Activated CD4-positive, alpha-beta T cell treated with anti-CD3 and anti-CD28 coated beads, Interleukin-2, amount 10 ng/mL, durations not matched to agents 24 days and 14 days (primary cell): ENCODE measurements at regions of chr3 and their contacts with region 1.

Region 1: DNA sequence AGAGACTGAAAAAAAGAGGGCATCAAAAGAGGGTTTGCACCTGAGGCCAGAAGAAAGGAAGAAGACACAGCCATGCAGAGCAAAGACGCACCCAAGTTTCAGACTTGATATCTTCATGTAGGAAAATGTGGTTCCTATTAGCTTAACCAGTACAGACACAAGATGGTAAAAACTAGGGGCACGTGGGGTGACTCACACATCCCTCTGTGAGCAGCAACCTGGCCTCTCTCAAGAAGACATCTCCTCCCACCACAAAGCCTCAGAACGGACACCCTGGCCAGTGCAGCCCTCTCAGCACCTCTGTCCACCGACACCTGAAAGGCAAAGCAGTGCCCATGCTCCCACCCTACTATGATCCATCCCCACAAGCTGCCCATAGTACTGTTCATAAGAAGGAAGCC is 33.3 kb downstream of the GLB1 start:
- DNase-seq: peak; percentile 85
- H3K4me3 Mint-ChIP-seq: peak overlapping the region; percentile 59
- H3K27ac Mint-ChIP-seq: peak overlapping the region; percentile 93
- H3K4me1 Mint-ChIP-seq: peaks cover 59% of the 10 kb centered on the region
- H3K27me3 Mint-ChIP-seq: no peaks in the 10 kb centered on the region

Region 2: DNA sequence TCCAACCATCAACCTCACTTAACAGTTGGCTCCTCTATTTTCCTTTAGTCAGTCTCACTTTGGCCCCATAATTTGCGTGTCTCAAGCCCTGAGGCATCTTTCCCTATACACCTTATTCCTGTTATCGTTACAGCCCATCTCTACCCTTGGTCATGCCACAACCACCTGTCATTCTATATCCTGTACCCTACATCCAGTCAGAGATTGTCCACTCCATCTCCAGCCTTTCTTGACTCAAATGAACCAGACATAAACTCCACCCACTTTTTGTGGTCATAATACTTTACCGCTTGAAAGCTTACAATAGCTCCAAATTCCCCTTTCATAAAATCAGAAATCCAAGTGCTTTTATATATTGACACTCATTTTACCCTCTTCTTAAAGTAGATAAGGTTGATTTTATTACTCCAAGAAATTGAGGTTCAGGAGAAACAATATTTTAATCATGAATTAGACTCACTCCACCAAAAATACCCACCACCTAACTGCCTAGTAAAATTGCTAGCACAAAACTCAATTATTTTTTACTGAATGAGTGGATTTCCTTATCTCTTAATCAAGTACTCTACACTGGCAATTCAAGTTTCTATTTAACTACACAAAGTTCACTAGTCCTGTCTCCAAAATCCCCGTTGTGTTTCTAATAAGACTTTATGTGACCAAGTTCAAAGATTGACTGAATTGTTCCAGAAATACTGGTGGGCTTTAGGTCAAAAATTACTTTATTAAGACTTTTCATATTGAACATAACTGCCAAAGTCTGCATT is 103.1 kb before region 1 on chr3:
- intact Hi-C with region 1: loop called (anchors 1 kb)
- DNase-seq: no peak
- H3K4me3 Mint-ChIP-seq: peak overlapping the region; percentile 68
- H3K27ac Mint-ChIP-seq: peak overlapping the region; percentile 96
- H3K4me1 Mint-ChIP-seq: peaks cover 46% of the 10 kb centered on the region
- H3K27me3 Mint-ChIP-seq: no peaks in the 10 kb centered on the region

Region 3: GRCh38 chr3:33023172-33024136 is 40.2 kb before region 1 on chr3:
- intact Hi-C with region 1: loop called (anchors 1 kb)
- DNase-seq: no peak
- H3K4me3 Mint-ChIP-seq: peak overlapping the region; percentile 59
- H3K27ac Mint-ChIP-seq: peak overlapping the region; percentile 95
- H3K4me1 Mint-ChIP-seq: peaks cover 48% of the 10 kb centered on the region
- H3K27me3 Mint-ChIP-seq: no peaks in the 10 kb centered on the region

Region 4: GRCh38 chr3:33030802-33031201 is 32.8 kb before region 1 on chr3:
- intact Hi-C with region 1: loop called (anchors 2 kb)
- DNase-seq: peak; percentile 82
- H3K4me3 Mint-ChIP-seq: no peak overlapping the region
- H3K27ac Mint-ChIP-seq: peak overlapping the region; percentile 45
- H3K4me1 Mint-ChIP-seq: peaks cover 25% of the 10 kb centered on the region
- H3K27me3 Mint-ChIP-seq: no peaks in the 10 kb centered on the region

Region 5: GRCh38 chr3:33047842-33048834 is 15.5 kb before region 1 on chr3:
- intact Hi-C with region 1: loop called (anchors 1 kb)
- DNase-seq: peak; percentile 91
- H3K4me3 Mint-ChIP-seq: peak overlapping the region; percentile 78
- H3K27ac Mint-ChIP-seq: peak overlapping the region; percentile 97
- H3K4me1 Mint-ChIP-seq: peaks cover 68% of the 10 kb centered on the region
- H3K27me3 Mint-ChIP-seq: no peaks in the 10 kb centered on the region

Region 6: GRCh38 chr3:33113772-33114621 is 50.3 kb after region 1 on chr3 and contains the start of gene CRTAP:
- intact Hi-C with region 1: loop called (anchors 5 kb)
- DNase-seq: peak; percentile 95
- H3K4me3 Mint-ChIP-seq: peak within 1 kb of the TSS; percentile 84
- H3K27ac Mint-ChIP-seq: peak within 1 kb of the TSS; percentile 81
- H3K4me1 Mint-ChIP-seq: peaks cover 16% of the 10 kb centered on the region
- H3K27me3 Mint-ChIP-seq: peaks cover 2% of the 10 kb centered on the region
- total RNA-seq, gene CRTAP: 33.1 and 34.2 TPM in 2 replicates